IMR-90 (cell line): ENCODE measurements at regions of chr3 and their contacts with region 1.

Region 1: GRCh38 chr3:33209357-33209756 is 9.3 kb downstream of the SUSD5 start:
- DNase-seq: no peak
- ATAC-seq: no peak
- H3K4me3 ChIP-seq: no peak overlapping the region
- H3K27ac ChIP-seq: no peak overlapping the region
- H3K4me1 ChIP-seq: no peaks in the 10 kb centered on the region
- H3K27me3 ChIP-seq: no peaks in the 10 kb centered on the region
- CTCF ChIP-seq: no peak
- POLR2A ChIP-seq: no peak
- RAD21 ChIP-seq: no peak

Region 2: GRCh38 chr3:33144433-33144832 is 64.9 kb before region 1 on chr3:
- CTCF ChIA-PET with region 1: no interaction called
- POLR2A ChIA-PET with region 1: no interaction called
- dilution Hi-C with region 1: no loop called
- in situ Hi-C with region 1: no loop called
- intact Hi-C with region 1: no loop called
- DNase-seq: no peak
- ATAC-seq: no peak
- H3K4me3 ChIP-seq: no peak overlapping the region
- H3K27ac ChIP-seq: no peak overlapping the region
- H3K4me1 ChIP-seq: peaks cover 6% of the 10 kb centered on the region
- H3K27me3 ChIP-seq: no peaks in the 10 kb centered on the region
- CTCF ChIP-seq: 0 out of 2 replicates have a peak, but pooled peaks have one; percentile 18
- POLR2A ChIP-seq: no peak
- RAD21 ChIP-seq: no peak

Region 3: GRCh38 chr3:33238923-33239322 is 29.6 kb after region 1 on chr3:
- CTCF ChIA-PET with region 1: no interaction called
- POLR2A ChIA-PET with region 1: no interaction called
- dilution Hi-C with region 1: no loop called
- in situ Hi-C with region 1: no loop called
- intact Hi-C with region 1: loop called (anchors 2 kb)
- DNase-seq: no peak
- ATAC-seq: no peak
- H3K4me3 ChIP-seq: no peak overlapping the region
- H3K27ac ChIP-seq: no peak overlapping the region
- H3K4me1 ChIP-seq: no peaks in the 10 kb centered on the region
- H3K27me3 ChIP-seq: peaks cover 6% of the 10 kb centered on the region
- CTCF ChIP-seq: no peak
- POLR2A ChIP-seq: no peak
- RAD21 ChIP-seq: no peak

Region 4: GRCh38 chr3:33525232-33525631 is 315.9 kb after region 1 on chr3:
- CTCF ChIA-PET with region 1: no interaction called
- POLR2A ChIA-PET with region 1: no interaction called
- dilution Hi-C with region 1: no loop called
- in situ Hi-C with region 1: no loop called
- intact Hi-C with region 1: no loop called
- DNase-seq: no peak
- ATAC-seq: no peak
- H3K4me3 ChIP-seq: no peak overlapping the region
- H3K27ac ChIP-seq: no peak overlapping the region
- H3K4me1 ChIP-seq: no peaks in the 10 kb centered on the region
- H3K27me3 ChIP-seq: no peaks in the 10 kb centered on the region
- CTCF ChIP-seq: no peak
- POLR2A ChIP-seq: no peak
- RAD21 ChIP-seq: no peak